Endothelial cell of umbilical vein (primary cell): ENCODE measurements at regions of chr21 and their contacts with region 1.

Region 1: DNA sequence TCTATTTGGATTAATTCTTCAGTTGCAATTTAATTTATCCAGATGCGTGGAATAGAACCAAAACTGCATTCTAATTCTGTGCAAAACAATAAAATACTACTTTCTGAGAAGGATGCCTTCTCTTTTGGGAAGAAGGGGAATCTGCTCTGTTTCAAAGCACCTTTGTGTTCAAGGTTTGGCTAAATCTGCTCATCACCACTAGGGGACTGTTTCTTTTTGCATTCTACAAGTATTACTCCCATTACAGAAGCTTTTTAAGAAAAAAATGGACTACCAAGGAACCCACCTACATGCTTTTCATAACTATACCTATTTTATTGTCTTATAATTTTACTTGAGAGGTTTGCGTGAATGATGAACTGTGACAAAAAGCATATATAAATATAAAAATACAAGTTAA is 18.2 kb downstream of the MRPS6 start:
- DNase-seq: peak; percentile 16
- H3K4me3 ChIP-seq: no peak overlapping the region
- H3K27ac ChIP-seq: no peak overlapping the region
- H3K4me1 ChIP-seq: peaks cover 16% of the 10 kb centered on the region
- H3K27me3 ChIP-seq: no peaks in the 10 kb centered on the region
- CTCF ChIP-seq: peak; percentile 20 to 27
- POLR2A ChIP-seq: no peak

Region 2: GRCh38 chr21:34080710-34081109 is 10.9 kb before region 1 on chr21:
- CTCF ChIA-PET with region 1: interaction called, 17 read pairs
- POLR2A ChIA-PET with region 1: interaction called, 3 read pairs
- dilution Hi-C with region 1: no loop called
- intact Hi-C with region 1: no loop called
- DNase-seq: peak; percentile 11
- H3K4me3 ChIP-seq: no peak overlapping the region
- H3K27ac ChIP-seq: no peak overlapping the region
- H3K4me1 ChIP-seq: no peaks in the 10 kb centered on the region
- H3K27me3 ChIP-seq: no peaks in the 10 kb centered on the region
- CTCF ChIP-seq: no peak
- POLR2A ChIP-seq: no peak

Region 3: GRCh38 chr21:34202553-34203372 is 111.2 kb after region 1 on chr21:
- CTCF ChIA-PET with region 1: interaction called, 12 read pairs
- POLR2A ChIA-PET with region 1: no interaction called
- dilution Hi-C with region 1: no loop called
- intact Hi-C with region 1: loop called (anchors 5 kb)
- DNase-seq: no peak
- H3K4me3 ChIP-seq: peak overlapping the region in 1 of 3 experiments; percentile 46
- H3K27ac ChIP-seq: no peak overlapping the region
- H3K4me1 ChIP-seq: peaks cover 6% of the 10 kb centered on the region
- H3K27me3 ChIP-seq: peaks cover 0 to 7% of the 10 kb centered on the region in 2 experiments
- CTCF ChIP-seq: no peak
- POLR2A ChIP-seq: no peak

Region 4: GRCh38 chr21:34243562-34243961 is 152.0 kb after region 1 on chr21:
- CTCF ChIA-PET with region 1: interaction called, 10 read pairs
- POLR2A ChIA-PET with region 1: no interaction called
- dilution Hi-C with region 1: no loop called
- intact Hi-C with region 1: no loop called
- DNase-seq: peak; percentile 31
- H3K4me3 ChIP-seq: no peak overlapping the region
- H3K27ac ChIP-seq: no peak overlapping the region
- H3K4me1 ChIP-seq: no peaks in the 10 kb centered on the region
- H3K27me3 ChIP-seq: peaks cover 2 to 5% of the 10 kb centered on the region in 2 experiments
- CTCF ChIP-seq: peak; percentile 53 to 62
- POLR2A ChIP-seq: no peak